Panc1 (cell line): ENCODE measurements at regions of chr6 and their contacts with region 1.

Region 1: GRCh38 chr6:139981768-139982181 is 607.3 kb upstream of the CITED2 start:
- DNase-seq: peak; percentile 59
- ATAC-seq: peak; percentile 83
- H3K4me3 ChIP-seq: peak overlapping the region in 1 of 2 experiments; percentile 9; a peak in 1 of 4 replicates
- H3K27ac ChIP-seq: peak overlapping the region; percentile 85
- H3K4me1 ChIP-seq: peaks cover 42% of the 10 kb centered on the region
- H3K27me3 ChIP-seq: no peaks in the 10 kb centered on the region
- CTCF ChIP-seq: no peak

Region 2: DNA sequence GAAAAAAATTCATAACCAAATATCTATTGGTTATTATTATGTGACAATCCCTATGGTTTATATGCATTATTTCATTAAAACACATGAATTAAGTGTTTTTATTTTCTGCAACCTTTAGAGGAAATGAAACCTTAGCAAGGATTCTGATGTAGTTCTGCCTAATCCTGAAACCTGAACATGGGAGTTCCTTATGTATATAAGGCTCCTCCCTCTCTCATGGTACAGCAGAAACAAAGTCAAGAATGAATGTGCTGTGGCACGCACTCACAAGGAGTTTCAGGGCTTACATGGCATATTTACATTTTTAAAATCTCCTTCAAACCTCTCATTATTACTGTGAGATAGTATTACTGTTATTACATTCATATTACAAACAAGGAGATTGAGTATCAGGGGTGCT is 180.9 kb before region 1 on chr6:
- CTCF ChIA-PET with region 1: no interaction called
- POLR2A ChIA-PET with region 1: no interaction called
- in situ Hi-C with region 1: no loop called
- intact Hi-C with region 1: no loop called
- DNase-seq: no peak
- ATAC-seq: no peak
- H3K4me3 ChIP-seq: no peak overlapping the region
- H3K27ac ChIP-seq: no peak overlapping the region
- H3K4me1 ChIP-seq: no peaks in the 10 kb centered on the region
- H3K27me3 ChIP-seq: no peaks in the 10 kb centered on the region
- CTCF ChIP-seq: no peak

Region 3: GRCh38 chr6:139881728-139882211 is 100.0 kb before region 1 on chr6:
- CTCF ChIA-PET with region 1: no interaction called
- POLR2A ChIA-PET with region 1: no interaction called
- in situ Hi-C with region 1: no loop called
- intact Hi-C with region 1: loop called (anchors 5 kb)
- DNase-seq: peak; percentile 79
- ATAC-seq: peak; percentile 92
- H3K4me3 ChIP-seq: peak overlapping the region; percentile 10 to 50
- H3K27ac ChIP-seq: peak overlapping the region; percentile 89
- H3K4me1 ChIP-seq: peaks cover 32% of the 10 kb centered on the region
- H3K27me3 ChIP-seq: no peaks in the 10 kb centered on the region
- CTCF ChIP-seq: peak; percentile 79